ENCODE measurements at regions of chr14 and their contacts with region 1.

Region 1: GRCh38 chr14:36880276-36880675 is 218.6 kb downstream of the PAX9 start:
- DNase-seq: no peak
- H3K4me3 ChIP-seq: no peak overlapping the region
- H3K27ac ChIP-seq: no peak overlapping the region
- H3K4me1 ChIP-seq: no peaks in the 10 kb centered on the region
- H3K27me3 ChIP-seq: no peaks in the 10 kb centered on the region
- CTCF ChIP-seq: no peak
- EP300 ChIP-seq: no peak
- POLR2A ChIP-seq: no peak

Region 2: DNA sequence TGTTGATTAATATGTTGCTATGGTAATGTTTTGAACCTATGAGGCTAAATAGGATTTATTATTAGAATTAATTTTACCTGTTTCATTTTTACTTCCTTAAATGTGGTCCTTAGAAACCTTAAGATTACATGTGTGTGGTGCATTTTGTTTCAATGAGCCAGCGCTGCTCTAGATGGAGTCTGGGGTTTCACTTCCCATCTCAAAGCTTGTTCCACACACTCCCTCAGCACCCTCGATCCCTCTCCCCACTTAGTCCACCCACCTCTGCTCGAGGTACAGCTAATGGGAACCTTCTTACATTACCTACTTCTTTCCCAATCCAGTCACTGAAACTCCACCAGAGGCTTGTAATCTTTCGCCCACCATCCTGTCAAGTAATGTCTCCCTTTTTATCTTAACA is 13.4 kb before region 1 on chr14:
- intact Hi-C with region 1: loop called in 1 of 4 experiments (anchors 1 kb)
- DNase-seq: no peak
- H3K4me3 ChIP-seq: no peak overlapping the region
- H3K27ac ChIP-seq: no peak overlapping the region
- H3K4me1 ChIP-seq: no peaks in the 10 kb centered on the region
- H3K27me3 ChIP-seq: no peaks in the 10 kb centered on the region
- CTCF ChIP-seq: no peak
- EP300 ChIP-seq: no peak
- POLR2A ChIP-seq: no peak